ENCODE measurements at regions of chr19 and their contacts with region 1.

Region 1: GRCh38 chr19:14405758-14406644 is 13.1 kb downstream of the DDX39A start:
- DNase-seq: peak; percentile 93
- ATAC-seq: peak; percentile 88
- H3K4me3 Mint-ChIP-seq: no peak overlapping the region
- H3K27ac Mint-ChIP-seq: peak overlapping the region; percentile 56
- H3K4me1 Mint-ChIP-seq: peaks cover 37% of the 10 kb centered on the region
- H3K27me3 Mint-ChIP-seq: no peaks in the 10 kb centered on the region
- CTCF ChIP-seq: no peak

Region 2: DNA sequence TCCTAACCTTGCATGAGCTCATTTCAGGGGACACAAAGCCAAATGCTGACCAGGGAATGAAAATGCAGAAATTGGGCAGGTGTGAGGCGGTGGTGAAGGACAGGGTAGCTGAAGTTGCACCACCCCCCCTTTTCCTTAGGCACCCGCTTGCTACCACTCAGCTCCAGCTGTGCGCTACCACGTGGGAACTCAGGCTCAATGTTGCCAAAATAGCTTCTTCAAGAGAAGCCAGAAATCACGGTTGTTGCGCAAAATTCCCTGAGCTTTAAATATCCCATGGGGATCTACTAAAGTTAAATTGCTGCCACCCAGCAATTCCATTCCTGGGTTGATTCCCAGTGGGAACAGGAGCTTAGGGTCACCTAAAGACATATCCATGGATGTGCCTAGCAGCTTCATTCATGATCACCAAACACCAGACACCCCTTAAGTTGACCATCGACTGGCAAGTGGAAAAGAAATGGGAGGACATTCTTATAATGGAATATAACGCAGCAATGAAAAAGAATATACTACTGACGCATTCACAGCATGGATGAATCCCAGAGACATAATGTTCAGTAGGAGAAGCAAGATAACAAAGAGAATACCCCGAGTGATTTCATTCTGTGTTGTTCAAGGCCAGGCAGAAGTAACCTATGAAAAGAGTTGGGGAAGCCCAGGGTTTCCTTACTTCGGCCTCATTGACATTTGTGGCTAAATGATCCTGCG is 187.2 kb before region 1 on chr19:
- CTCF ChIA-PET with region 1: interaction called, 10 read pairs
- POLR2A ChIA-PET with region 1: interaction called, 3 read pairs
- intact Hi-C with region 1: loop called (anchors 5 kb)
- DNase-seq: no peak
- ATAC-seq: no peak
- H3K4me3 Mint-ChIP-seq: no peak overlapping the region
- H3K27ac Mint-ChIP-seq: no peak overlapping the region
- H3K4me1 Mint-ChIP-seq: peaks cover 13% of the 10 kb centered on the region
- H3K27me3 Mint-ChIP-seq: peaks cover 3% of the 10 kb centered on the region
- CTCF ChIP-seq: no peak

Region 3: DNA sequence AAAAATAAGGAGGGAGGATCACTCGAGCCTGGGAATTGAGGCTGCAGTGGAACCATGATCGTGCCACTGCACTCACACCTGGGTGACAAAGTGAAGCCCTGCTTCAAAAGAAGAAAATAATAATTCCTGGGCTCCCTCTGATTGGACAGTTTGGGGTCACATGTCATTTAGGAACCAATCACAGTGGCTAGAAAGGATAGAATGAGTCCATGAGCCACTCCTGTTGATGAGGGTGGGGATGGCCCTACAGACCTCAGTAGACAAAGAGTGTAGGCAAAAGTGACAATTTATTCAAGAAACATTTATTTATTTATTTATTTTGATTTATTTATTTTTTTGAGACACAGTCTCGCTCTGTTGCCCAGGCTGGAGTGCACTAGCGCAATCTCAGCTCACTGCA is 51.6 kb before region 1 on chr19:
- CTCF ChIA-PET with region 1: interaction called, 76 read pairs
- POLR2A ChIA-PET with region 1: interaction called, 11 read pairs
- intact Hi-C with region 1: no loop called
- DNase-seq: no peak
- ATAC-seq: no peak
- H3K4me3 Mint-ChIP-seq: no peak overlapping the region
- H3K27ac Mint-ChIP-seq: no peak overlapping the region
- H3K4me1 Mint-ChIP-seq: peaks cover 34% of the 10 kb centered on the region
- H3K27me3 Mint-ChIP-seq: no peaks in the 10 kb centered on the region
- CTCF ChIP-seq: no peak

Region 4: GRCh38 chr19:14383661-14384555 is 22.1 kb before region 1 on chr19:
- CTCF ChIA-PET with region 1: interaction called, 8 read pairs
- POLR2A ChIA-PET with region 1: interaction called, 56 read pairs
- intact Hi-C with region 1: loop called (anchors 1 kb)
- DNase-seq: peak; percentile 55
- ATAC-seq: peak; percentile 25
- H3K4me3 Mint-ChIP-seq: peak overlapping the region; percentile 93
- H3K27ac Mint-ChIP-seq: peak overlapping the region; percentile 93
- H3K4me1 Mint-ChIP-seq: peaks cover 54% of the 10 kb centered on the region
- H3K27me3 Mint-ChIP-seq: no peaks in the 10 kb centered on the region
- CTCF ChIP-seq: no peak